SK-N-SH (cell line): ENCODE measurements at regions of chr7 and their contacts with region 1.

Region 1: GRCh38 chr7:134355927-134356326 is 39.2 kb upstream of the SLC35B4 start:
- DNase-seq: no peak
- H3K4me3 ChIP-seq: no peak overlapping the region
- H3K27ac ChIP-seq: no peak overlapping the region
- H3K4me1 ChIP-seq: peaks cover 0 to 13% of the 10 kb centered on the region in 2 experiments; a peak in 1 of 4 replicates
- H3K27me3 ChIP-seq: no peaks in the 10 kb centered on the region
- CTCF ChIP-seq: no peak
- EP300 ChIP-seq: no peak
- RAD21 ChIP-seq: no peak

Region 2: GRCh38 chr7:134327896-134328295 is 28.0 kb before region 1 on chr7:
- CTCF ChIA-PET with region 1: interaction called, 12 read pairs
- POLR2A ChIA-PET with region 1: no interaction called
- DNase-seq: peak; percentile 47
- H3K4me3 ChIP-seq: no peak overlapping the region
- H3K27ac ChIP-seq: no peak overlapping the region
- H3K4me1 ChIP-seq: peaks cover 0 to 7% of the 10 kb centered on the region in 2 experiments; a peak in 2 of 4 replicates
- H3K27me3 ChIP-seq: peaks cover 11% of the 10 kb centered on the region; the same call in 1 of the 2 replicates
- CTCF ChIP-seq: peak; percentile 66
- EP300 ChIP-seq: no peak
- RAD21 ChIP-seq: peak; percentile 77

Region 3: GRCh38 chr7:134337980-134338379 is 17.9 kb before region 1 on chr7:
- CTCF ChIA-PET with region 1: interaction called, 57 read pairs
- POLR2A ChIA-PET with region 1: no interaction called
- DNase-seq: no peak
- H3K4me3 ChIP-seq: no peak overlapping the region
- H3K27ac ChIP-seq: no peak overlapping the region
- H3K4me1 ChIP-seq: peaks cover 0 to under 1% of the 10 kb centered on the region in 2 experiments; a peak in 2 of 4 replicates
- H3K27me3 ChIP-seq: peaks cover 25% of the 10 kb centered on the region
- CTCF ChIP-seq: no peak
- EP300 ChIP-seq: no peak
- RAD21 ChIP-seq: no peak

Region 4: GRCh38 chr7:134368851-134369552 is 13.1 kb after region 1 on chr7:
- CTCF ChIA-PET with region 1: interaction called, 20 read pairs
- POLR2A ChIA-PET with region 1: no interaction called
- DNase-seq: no peak
- H3K4me3 ChIP-seq: no peak overlapping the region
- H3K27ac ChIP-seq: peak overlapping the region in 1 of 2 experiments; percentile 13; a peak in 2 of 4 replicates
- H3K4me1 ChIP-seq: peaks cover 8 to 12% of the 10 kb centered on the region in 2 experiments
- H3K27me3 ChIP-seq: no peaks in the 10 kb centered on the region
- CTCF ChIP-seq: no peak
- EP300 ChIP-seq: no peak
- RAD21 ChIP-seq: no peak